ENCODE measurements at regions of chr7 and their contacts with region 1.

Region 1: DNA sequence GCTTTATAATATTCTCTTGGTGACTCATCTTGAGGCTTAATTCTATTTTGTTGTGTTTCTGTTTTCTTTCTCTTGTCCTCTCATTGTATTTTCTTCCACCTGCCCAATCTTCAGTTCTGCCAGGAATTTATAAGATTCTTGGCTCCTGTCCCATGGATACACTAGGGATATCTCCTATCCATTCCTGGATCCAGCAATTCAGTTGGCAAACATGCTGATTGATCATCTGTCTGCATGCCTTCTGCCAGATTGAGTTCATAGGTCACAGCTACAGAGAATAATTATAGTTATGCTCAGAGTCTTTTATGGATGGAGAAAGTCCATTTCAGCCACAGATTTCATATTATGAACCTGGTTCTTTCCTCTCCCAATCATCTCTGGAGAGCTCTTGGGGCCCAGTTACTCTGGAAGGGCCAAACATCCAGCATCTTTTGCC is 140.4 kb upstream of the MAGI2 start:
- DNase-seq: no peak
- ATAC-seq: no peak
- H3K4me3 ChIP-seq: no peak overlapping the region
- H3K27ac ChIP-seq: no peak overlapping the region; the same call in 1 of the 2 replicates
- H3K4me1 ChIP-seq: no peaks in the 10 kb centered on the region; the same call in 1 of the 2 replicates
- H3K27me3 ChIP-seq: no peaks in the 10 kb centered on the region
- CTCF ChIP-seq: no peak

Region 2: DNA sequence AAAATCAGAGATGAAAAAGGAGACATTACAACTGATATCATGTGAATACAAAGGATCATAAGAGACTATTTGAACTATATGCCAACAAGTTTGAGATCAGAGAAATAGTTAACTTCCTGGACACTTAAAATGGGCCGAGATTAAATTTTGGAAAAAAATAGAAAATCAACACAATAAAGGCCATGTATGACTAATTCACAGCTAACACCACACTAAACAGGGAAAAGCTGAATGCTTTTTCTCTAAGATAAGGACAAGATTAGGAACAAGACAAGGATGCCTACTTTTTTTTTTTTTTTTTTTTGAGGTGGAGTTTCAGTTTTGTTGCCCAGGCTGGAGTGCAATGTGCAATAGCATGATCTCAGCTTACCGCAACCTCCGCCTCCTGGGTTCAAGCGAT is 11.0 kb after region 1 on chr7:
- CTCF ChIA-PET with region 1: no interaction called
- POLR2A ChIA-PET with region 1: interaction called, 11 read pairs
- in situ Hi-C with region 1: no loop called
- intact Hi-C with region 1: no loop called
- DNase-seq: no peak
- ATAC-seq: no peak
- H3K4me3 ChIP-seq: no peak overlapping the region
- H3K27ac ChIP-seq: no peak overlapping the region
- H3K4me1 ChIP-seq: no peaks in the 10 kb centered on the region
- H3K27me3 ChIP-seq: no peaks in the 10 kb centered on the region
- CTCF ChIP-seq: no peak

Region 3: GRCh38 chr7:79615466-79615865 is 21.6 kb after region 1 on chr7:
- CTCF ChIA-PET with region 1: no interaction called
- POLR2A ChIA-PET with region 1: no interaction called
- in situ Hi-C with region 1: no loop called
- intact Hi-C with region 1: no loop called
- DNase-seq: no peak
- ATAC-seq: no peak
- H3K4me3 ChIP-seq: no peak overlapping the region
- H3K27ac ChIP-seq: no peak overlapping the region
- H3K4me1 ChIP-seq: no peaks in the 10 kb centered on the region
- H3K27me3 ChIP-seq: no peaks in the 10 kb centered on the region
- CTCF ChIP-seq: no peak